Activated CD8-positive, alpha-beta T cell treated with anti-CD3 and anti-CD28 coated beads for 36 hours (primary cell): ENCODE measurements at regions of chr7 and their contacts with region 1.

Region 1: GRCh38 chr7:77798394-77799077 is at the starts of genes PHTF2 and TMEM60:
- DNase-seq: peak; percentile 97
- ATAC-seq: peak; percentile 92
- H3K4me3 Mint-ChIP-seq: peak within 1 kb of the TSS; percentile 89
- H3K27ac Mint-ChIP-seq: peak within 1 kb of the TSS; percentile 94
- H3K4me1 Mint-ChIP-seq: peaks cover 62% of the 10 kb centered on the region
- H3K27me3 Mint-ChIP-seq: no peaks in the 10 kb centered on the region
- CTCF ChIP-seq: peak; percentile 67
- total RNA-seq, gene PHTF2: 25.2 to 25.4 TPM
- total RNA-seq, gene TMEM60: 8.1 to 8.6 TPM

Region 2: GRCh38 chr7:77619314-77619713 is 179.2 kb before region 1 on chr7:
- CTCF ChIA-PET with region 1: no interaction called
- POLR2A ChIA-PET with region 1: no interaction called
- intact Hi-C with region 1: no loop called
- DNase-seq: no peak
- ATAC-seq: no peak
- H3K4me3 Mint-ChIP-seq: no peak overlapping the region
- H3K27ac Mint-ChIP-seq: no peak overlapping the region
- H3K4me1 Mint-ChIP-seq: peaks cover 3% of the 10 kb centered on the region
- H3K27me3 Mint-ChIP-seq: no peaks in the 10 kb centered on the region
- CTCF ChIP-seq: no peak

Region 3: GRCh38 chr7:77843194-77843593 is 44.7 kb after region 1 on chr7:
- CTCF ChIA-PET with region 1: no interaction called
- POLR2A ChIA-PET with region 1: no interaction called
- intact Hi-C with region 1: no loop called
- DNase-seq: no peak
- ATAC-seq: no peak
- H3K4me3 Mint-ChIP-seq: no peak overlapping the region
- H3K27ac Mint-ChIP-seq: no peak overlapping the region
- H3K4me1 Mint-ChIP-seq: peaks cover 3% of the 10 kb centered on the region
- H3K27me3 Mint-ChIP-seq: no peaks in the 10 kb centered on the region
- CTCF ChIP-seq: no peak

Region 4: DNA sequence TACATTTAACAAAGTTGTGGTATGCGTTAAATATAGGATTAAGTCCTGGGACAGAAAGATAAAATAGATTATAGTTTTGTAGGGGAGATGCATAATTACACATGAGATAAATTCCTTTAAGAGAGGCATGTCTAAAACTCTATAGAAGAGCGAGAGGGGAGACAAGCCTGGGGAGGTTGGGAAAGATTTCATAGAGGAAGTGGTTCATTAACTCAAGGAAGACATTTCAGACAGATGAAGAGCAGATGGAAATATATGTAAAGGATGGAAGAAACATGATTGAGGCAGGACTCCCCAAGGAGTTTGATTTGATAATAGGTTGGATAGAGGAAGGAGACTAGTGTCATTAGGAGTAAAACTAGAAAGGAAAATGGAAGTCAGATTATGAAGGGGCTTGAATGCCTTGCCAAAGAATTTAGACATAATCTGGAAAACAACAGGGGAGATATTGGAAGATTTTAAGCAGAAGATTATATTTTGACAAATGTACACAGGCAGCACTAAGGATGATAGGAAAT is 96.1 kb after region 1 on chr7:
- CTCF ChIA-PET with region 1: interaction called, 3 read pairs
- POLR2A ChIA-PET with region 1: no interaction called
- intact Hi-C with region 1: loop called (anchors 5 kb)
- DNase-seq: no peak
- ATAC-seq: no peak
- H3K4me3 Mint-ChIP-seq: no peak overlapping the region
- H3K27ac Mint-ChIP-seq: no peak overlapping the region
- H3K4me1 Mint-ChIP-seq: peaks cover 2% of the 10 kb centered on the region
- H3K27me3 Mint-ChIP-seq: no peaks in the 10 kb centered on the region
- CTCF ChIP-seq: no peak